ENCODE measurements at regions of chr11 and their contacts with region 1.

Region 1: DNA sequence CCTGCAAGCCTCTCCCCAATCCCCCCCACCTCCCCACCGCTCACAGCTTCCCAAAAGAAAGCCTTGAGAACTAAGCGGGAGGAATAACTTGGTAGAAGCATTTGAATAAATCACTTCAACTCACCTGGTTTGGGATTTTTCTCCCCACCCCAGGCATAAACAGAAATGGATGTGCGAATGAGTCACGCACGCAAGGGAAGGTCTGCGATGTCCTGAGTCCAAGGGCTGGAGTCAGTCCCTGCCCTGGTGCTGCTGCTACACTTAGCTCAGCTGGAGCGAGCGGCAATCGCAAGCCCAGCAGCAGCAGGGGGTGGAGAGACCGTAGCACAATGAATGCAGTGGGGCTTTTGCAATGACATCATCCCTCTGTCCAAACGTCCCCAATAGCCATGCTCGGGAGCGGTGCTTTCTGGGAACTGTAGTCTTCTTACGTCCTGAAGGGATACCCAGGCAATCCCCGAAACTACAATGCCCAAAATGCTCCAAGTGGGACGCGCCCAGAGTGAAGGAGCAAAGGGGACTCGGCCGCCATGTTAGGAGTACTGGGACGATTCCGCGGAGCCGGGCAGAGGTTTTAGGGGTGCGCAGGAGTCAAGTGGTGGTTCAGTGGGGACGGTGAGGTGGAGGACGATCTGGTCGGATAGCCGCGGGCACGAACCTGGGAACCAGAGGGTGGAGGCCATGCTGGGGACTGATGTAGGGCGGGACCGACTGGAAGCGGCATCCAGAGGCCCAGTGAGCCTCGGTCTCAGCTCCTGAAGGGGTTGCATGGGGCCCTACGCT is at the start of gene RAB30:
- DNase-seq: peak; percentile 98
- ATAC-seq: peak; percentile 98
- H3K4me3 Mint-ChIP-seq: no peak within 1 kb of the TSS
- H3K27ac Mint-ChIP-seq: no peak within 1 kb of the TSS
- H3K4me1 Mint-ChIP-seq: peaks cover 28% of the 10 kb centered on the region
- H3K27me3 Mint-ChIP-seq: no peaks in the 10 kb centered on the region
- total RNA-seq, gene RAB30: 8.8 to 13.3 TPM

Region 2: DNA sequence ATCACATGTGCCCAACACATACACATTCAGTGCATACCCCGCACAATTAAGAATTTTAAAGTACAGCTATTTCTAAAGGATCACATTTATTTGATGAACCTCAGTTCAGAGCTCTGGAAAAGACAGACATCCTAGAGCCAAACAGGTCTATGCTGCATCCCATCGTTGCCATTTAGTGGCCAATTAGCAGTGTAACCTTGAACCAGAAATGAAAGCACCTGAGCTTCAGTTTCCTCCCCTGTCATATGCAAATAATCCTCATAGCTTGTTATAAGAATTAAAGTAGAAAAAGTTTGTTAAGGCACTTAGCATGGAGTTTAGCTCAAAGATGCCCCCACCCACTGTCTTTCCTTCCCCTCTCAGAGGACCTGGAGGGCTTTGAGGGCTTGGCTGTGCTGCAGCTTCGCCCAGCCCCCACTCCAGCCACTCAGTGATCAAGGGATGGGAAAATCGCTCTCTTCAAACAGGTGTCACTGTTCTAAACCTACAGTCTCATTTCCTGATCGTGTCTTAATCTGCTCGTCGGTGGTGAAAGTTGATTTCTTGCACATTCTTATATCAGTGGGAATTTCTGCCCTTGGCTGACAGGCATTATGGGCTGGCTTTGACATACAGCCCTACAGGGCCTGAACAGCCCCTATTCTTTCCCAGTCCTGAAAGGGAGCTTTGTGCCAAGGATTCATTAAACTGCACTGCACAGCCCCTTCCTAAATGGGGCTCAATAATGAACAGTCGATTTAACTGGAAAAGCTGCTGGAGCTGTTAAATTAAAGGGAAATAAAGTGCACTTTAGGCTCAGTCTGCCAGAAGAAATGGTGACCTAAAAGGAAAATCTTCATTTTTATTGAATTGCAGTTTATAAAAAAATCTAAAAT is 314.8 kb before region 1 on chr11:
- CTCF ChIA-PET with region 1: no interaction called
- POLR2A ChIA-PET with region 1: no interaction called
- DNase-seq: no peak
- ATAC-seq: peak; percentile 11
- H3K4me3 Mint-ChIP-seq: no peak overlapping the region
- H3K27ac Mint-ChIP-seq: no peak overlapping the region
- H3K4me1 Mint-ChIP-seq: peaks cover 13% of the 10 kb centered on the region
- H3K27me3 Mint-ChIP-seq: peaks cover 13% of the 10 kb centered on the region

Region 3: DNA sequence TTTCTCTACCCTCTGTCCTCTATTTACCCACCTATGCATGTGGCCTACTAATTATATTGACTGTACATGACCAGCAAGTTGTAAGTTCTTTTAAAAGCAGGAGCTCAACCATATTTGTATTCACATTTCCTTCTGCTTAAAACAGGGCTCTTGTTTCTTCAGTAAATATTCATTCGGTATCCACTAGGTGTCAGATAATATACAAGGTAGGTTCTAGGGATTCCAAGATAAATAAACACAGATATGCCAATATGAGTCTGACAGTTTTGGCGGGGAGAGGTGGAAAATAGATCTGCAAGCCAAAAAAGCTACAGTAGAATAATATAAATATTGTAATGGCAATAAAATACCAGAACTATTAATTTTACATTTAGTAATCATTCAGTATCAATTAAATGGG is 15.3 kb after region 1 on chr11:
- CTCF ChIA-PET with region 1: interaction called, 10 read pairs
- POLR2A ChIA-PET with region 1: interaction called, 5 read pairs
- DNase-seq: no peak
- ATAC-seq: no peak
- H3K4me3 Mint-ChIP-seq: no peak overlapping the region
- H3K27ac Mint-ChIP-seq: no peak overlapping the region
- H3K4me1 Mint-ChIP-seq: no peaks in the 10 kb centered on the region
- H3K27me3 Mint-ChIP-seq: no peaks in the 10 kb centered on the region

Region 4: GRCh38 chr11:83285771-83286528 is 214.2 kb after region 1 on chr11 and contains the start of gene CCDC90B:
- CTCF ChIA-PET with region 1: no interaction called
- POLR2A ChIA-PET with region 1: interaction called, 10 read pairs
- DNase-seq: peak; percentile 97
- ATAC-seq: peak; percentile 94
- H3K4me3 Mint-ChIP-seq: peak within 1 kb of the TSS; percentile 95
- H3K27ac Mint-ChIP-seq: peak within 1 kb of the TSS; percentile 99
- H3K4me1 Mint-ChIP-seq: peaks cover 30% of the 10 kb centered on the region
- H3K27me3 Mint-ChIP-seq: peaks cover under 1% of the 10 kb centered on the region
- total RNA-seq, gene CCDC90B: 30.2 to 31.3 TPM

Measured in activated CD8-positive, alpha-beta T cell treated with anti-CD3 and anti-CD28 coated beads, Interleukin-2, amount 10 ng/mL, durations not matched to agents 7 days and 5 days (primary cell).